Cardiac septum (tissue), 1 donor: ENCODE measurements at regions of chr18 and their contacts with region 1.

Region 1: DNA sequence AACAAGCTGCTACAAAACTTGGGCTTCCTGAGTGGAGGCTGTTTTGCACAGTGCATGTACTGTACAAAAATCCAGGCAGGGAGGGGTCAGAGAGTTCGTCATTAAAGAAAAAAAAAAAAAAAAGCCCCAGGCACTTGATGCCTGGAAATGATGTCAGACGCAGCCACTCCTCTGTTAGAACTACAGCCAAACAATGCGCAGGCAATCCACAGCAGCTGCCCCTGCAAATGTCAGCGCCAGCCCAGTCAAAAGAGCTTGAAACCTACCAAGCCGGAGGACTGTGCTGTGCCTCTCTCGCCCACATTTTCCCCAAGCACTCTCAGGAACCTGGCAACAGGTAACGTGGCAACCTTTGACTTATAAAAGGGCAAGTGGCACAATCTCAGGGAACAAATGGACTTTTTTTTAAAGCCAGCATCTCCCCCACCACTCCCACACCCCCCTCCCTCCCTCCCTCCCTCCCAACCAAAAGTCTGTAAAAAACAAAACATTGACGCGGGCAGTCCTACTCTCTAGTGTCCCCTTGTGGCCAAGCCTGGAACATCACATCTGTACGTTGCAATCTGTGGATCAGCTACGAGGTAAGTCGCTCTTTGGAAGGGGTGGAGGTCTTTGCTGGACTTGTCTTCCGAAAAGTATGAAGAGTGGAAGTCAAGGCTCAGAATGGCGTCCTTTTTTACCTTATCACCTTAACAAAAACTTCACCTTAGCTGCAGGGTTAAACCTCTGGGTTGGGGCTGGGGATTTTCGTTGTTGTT is 144.1 kb downstream of the TGIF1 start:
- DNase-seq: peak; percentile 92

Region 2: GRCh38 chr18:2971741-2972552 is 622.1 kb before region 1 on chr18:
- intact Hi-C with region 1: no loop called
- DNase-seq: peak; percentile 84

Region 3: DNA sequence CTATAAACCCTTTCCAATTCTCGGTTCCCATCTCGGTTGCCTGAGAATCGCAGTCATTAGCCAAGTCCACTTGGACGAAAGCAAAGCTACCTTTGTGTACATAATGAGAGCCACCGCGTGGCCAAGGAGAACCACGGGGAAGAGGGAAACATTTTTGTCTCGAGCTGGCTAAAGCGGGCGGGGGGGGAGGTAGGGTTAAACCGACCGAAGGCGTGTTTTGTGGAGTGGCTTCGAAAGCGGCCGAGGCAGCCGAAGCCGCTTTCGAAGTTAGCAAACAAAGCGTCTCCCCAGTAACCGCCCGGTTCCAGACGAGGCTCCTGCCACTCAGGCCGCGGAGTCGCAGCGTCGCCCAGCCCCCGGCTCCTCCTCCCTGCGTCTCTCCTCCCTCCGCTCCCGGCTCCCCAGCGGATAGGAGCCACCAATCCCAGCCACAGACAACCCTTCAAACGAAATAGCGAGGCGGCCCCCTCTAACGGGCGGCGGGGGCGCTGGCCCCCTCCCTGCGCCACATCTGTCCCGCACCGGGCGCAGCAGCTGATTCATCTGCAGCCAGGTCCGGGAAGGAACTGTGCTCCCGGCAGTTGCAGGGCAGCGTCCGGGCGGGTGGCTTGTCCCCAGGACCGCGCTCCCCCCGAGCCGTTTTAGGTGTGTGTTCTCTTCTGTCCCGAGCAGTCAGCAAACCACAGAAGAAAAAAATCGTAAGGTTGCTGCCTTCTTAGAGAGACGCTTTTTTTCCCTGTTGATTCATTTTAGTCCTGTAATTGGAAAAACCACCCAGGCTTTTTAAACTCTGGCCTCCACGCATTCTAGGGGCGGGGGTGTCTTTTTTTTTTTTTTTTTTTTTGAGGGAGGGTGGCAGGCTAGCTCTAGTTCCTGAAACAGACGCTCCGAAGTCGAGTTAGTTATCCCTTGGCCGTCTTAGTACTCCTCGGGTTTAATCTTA is 145.9 kb before region 1 on chr18:
- intact Hi-C with region 1: loop called (anchors 2 kb)
- DNase-seq: peak; percentile 96

Region 4: GRCh38 chr18:3454365-3455089 is 139.6 kb before region 1 on chr18:
- intact Hi-C with region 1: loop called (anchors 1 kb)
- DNase-seq: no peak

Region 5: DNA sequence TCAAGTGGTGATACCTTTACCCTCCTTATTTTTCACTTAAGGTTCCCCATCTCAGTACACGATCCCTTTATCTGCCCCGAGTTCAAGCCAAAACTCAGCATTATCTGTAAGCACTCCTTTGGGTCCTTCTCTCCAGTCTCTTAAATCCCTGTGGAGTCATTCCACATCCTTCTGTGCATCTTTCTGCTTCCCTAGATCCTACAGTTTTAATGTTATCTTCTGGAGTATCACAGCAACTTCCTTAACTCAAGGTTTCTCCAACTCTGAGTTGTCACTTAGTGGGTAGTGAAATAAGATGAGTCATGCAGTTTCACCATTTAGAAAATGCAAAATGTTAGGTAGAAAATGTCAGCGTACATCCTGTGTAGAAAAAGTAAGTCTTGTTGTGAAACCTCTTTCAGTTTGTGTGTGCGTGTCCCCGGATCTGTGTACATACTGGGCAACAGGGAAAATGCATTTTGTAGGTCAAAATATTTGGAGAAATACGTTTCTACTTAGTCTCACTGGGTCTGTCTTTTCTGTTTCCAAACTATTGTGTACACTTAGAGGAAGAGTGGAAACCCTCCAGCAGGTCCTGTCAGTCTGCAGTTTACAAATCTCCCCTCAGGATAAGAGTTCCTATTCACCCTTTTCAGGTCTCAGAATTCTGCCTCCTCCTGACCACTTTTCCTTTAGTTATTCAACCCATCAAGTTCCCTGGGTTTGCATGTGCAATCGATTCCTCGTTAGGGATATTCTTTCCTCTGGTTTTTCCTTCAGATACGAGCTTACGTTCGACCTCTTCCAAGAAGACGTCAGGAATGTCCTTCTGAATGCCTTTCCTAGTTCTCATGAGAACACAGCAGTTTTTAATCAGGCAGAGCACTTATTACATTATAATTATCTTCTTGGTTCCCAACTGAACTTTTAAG is 10.7 kb after region 1 on chr18:
- intact Hi-C with region 1: loop called (anchors 1 kb)
- DNase-seq: peak; percentile 26

Region 6: GRCh38 chr18:3623769-3624545 is 29.9 kb after region 1 on chr18:
- intact Hi-C with region 1: loop called (anchors 1 kb)
- DNase-seq: peak; percentile 88

Region 7: GRCh38 chr18:3665780-3666525 is 71.9 kb after region 1 on chr18:
- intact Hi-C with region 1: loop called (anchors 5 kb)
- DNase-seq: peak; percentile 85